A549 (cell line): ENCODE measurements at regions of chr3 and their contacts with region 1.

Region 1: DNA sequence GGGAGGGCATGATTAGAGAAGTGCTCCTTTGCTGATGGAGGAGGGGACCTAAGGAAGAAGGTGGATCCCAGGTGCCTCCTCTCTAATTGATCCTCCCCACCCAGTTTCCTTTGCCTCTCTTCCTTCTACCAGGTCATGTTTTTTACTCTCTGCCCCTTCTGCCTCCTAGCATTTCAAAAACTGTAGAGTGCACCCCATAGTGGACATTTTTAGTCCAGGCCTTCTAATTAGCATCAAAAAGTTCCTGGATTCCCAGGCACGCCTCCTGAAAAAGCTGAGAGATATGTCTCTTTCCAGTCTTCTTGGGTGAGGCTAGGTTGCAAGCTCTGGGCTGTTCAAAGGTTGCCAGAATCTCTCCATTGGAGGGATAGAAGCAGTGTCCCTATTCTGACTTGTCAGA is 18.7 kb upstream of the ITGB5 start:
- DNase-seq: no peak
- ATAC-seq: peak; percentile 39 to 41; a peak in 2 of 6 replicates
- H3K4me3 ChIP-seq: no peak overlapping the region
- H3K27ac ChIP-seq: no peak overlapping the region
- H3K4me1 ChIP-seq: peaks cover 4% of the 10 kb centered on the region; the same call in 2 of the 3 replicates
- CTCF ChIP-seq: no peak
- EP300 ChIP-seq: no peak
- POLR2A ChIP-seq: no peak
- RAD21 ChIP-seq: peak in 1 of 2 experiments; percentile 25; a peak in 1 of 5 replicates

Region 2: GRCh38 chr3:124559881-124560574 is 345.8 kb before region 1 on chr3:
- CTCF ChIA-PET with region 1: interaction called, 11 read pairs
- POLR2A ChIA-PET with region 1: no interaction called
- DNase-seq: peak; percentile 83 to 85
- ATAC-seq: peak; percentile 82 to 89
- H3K4me3 ChIP-seq: no peak overlapping the region
- H3K27ac ChIP-seq: peak overlapping the region; percentile 55 to 75; a peak in 5 of 6 replicates
- H3K4me1 ChIP-seq: peaks cover 29% of the 10 kb centered on the region
- CTCF ChIP-seq: peak; percentile 87
- EP300 ChIP-seq: no peak
- POLR2A ChIP-seq: no peak
- RAD21 ChIP-seq: peak; percentile 84 to 92

Region 3: DNA sequence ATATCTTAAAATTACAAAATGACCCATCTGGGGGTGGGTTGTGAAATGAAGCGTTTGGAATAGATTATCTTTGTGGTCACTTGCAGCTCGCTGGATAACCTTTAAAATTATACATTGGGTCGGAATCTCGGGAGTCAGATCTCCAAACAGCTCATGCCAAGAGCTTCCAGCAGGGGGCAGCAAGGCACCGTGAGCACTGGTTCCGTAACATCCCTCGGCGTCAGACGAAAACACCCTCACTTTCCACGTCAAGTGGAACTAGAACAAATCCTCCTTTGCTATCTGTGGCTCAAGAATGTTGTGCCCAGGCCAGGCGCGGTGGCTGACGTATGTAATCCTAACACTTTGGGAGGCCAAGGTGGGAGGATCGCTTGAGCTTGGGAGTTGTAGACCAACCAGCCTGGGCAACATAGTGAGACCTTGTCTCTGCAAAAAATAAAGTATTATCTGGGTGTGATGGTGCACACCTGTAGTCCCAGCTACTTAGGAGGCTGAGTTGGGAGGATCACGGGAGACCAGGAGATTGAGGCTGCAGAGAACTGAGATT is 144.5 kb before region 1 on chr3:
- CTCF ChIA-PET with region 1: interaction called, 352 read pairs
- POLR2A ChIA-PET with region 1: interaction called, 5 read pairs
- DNase-seq: peak; percentile 68 to 91
- ATAC-seq: peak; percentile 73
- H3K4me3 ChIP-seq: no peak overlapping the region
- H3K27ac ChIP-seq: peak overlapping the region; percentile 60 to 75
- H3K4me1 ChIP-seq: peaks cover 28% of the 10 kb centered on the region
- CTCF ChIP-seq: peak; percentile 95
- EP300 ChIP-seq: no peak
- POLR2A ChIP-seq: no peak
- RAD21 ChIP-seq: peak; percentile 97 to 98

Region 4: GRCh38 chr3:124800511-124801258 is 105.2 kb before region 1 on chr3:
- CTCF ChIA-PET with region 1: interaction called, 21 read pairs
- POLR2A ChIA-PET with region 1: no interaction called
- DNase-seq: no peak
- ATAC-seq: peak; percentile 16 to 37; a peak in 4 of 6 replicates
- H3K4me3 ChIP-seq: no peak overlapping the region
- H3K27ac ChIP-seq: peak overlapping the region; percentile 43 to 67; a peak in 5 of 6 replicates
- H3K4me1 ChIP-seq: peaks cover 18% of the 10 kb centered on the region
- CTCF ChIP-seq: no peak
- EP300 ChIP-seq: no peak
- POLR2A ChIP-seq: no peak
- RAD21 ChIP-seq: no peak

Region 5: GRCh38 chr3:124834723-124835718 is 70.8 kb before region 1 on chr3:
- CTCF ChIA-PET with region 1: interaction called, 12 read pairs
- POLR2A ChIA-PET with region 1: no interaction called
- DNase-seq: peak; percentile 61 to 91
- ATAC-seq: peak; percentile 36 to 37
- H3K4me3 ChIP-seq: peak overlapping the region; percentile 22; the same call in 1 of the 3 replicates
- H3K27ac ChIP-seq: peak overlapping the region; percentile 93 to 94
- H3K4me1 ChIP-seq: peaks cover 85% of the 10 kb centered on the region
- CTCF ChIP-seq: no peak
- EP300 ChIP-seq: peak; percentile 8 to 84; a peak in 2 of 5 replicates
- POLR2A ChIP-seq: no peak
- RAD21 ChIP-seq: peak in 1 of 2 experiments; percentile 5; a peak in 2 of 5 replicates

Region 6: GRCh38 chr3:124878561-124879336 is 27.1 kb before region 1 on chr3:
- CTCF ChIA-PET with region 1: interaction called, 23 read pairs
- POLR2A ChIA-PET with region 1: no interaction called
- DNase-seq: peak; percentile 92 to 98
- ATAC-seq: peak; percentile 95 to 98
- H3K4me3 ChIP-seq: peak overlapping the region; percentile 22; the same call in 1 of the 3 replicates
- H3K27ac ChIP-seq: peak overlapping the region; percentile 91 to 99
- H3K4me1 ChIP-seq: peaks cover 83% of the 10 kb centered on the region
- CTCF ChIP-seq: no peak
- EP300 ChIP-seq: peak; percentile 95 to 98
- POLR2A ChIP-seq: no peak
- RAD21 ChIP-seq: peak; percentile 25 to 60

Region 7: DNA sequence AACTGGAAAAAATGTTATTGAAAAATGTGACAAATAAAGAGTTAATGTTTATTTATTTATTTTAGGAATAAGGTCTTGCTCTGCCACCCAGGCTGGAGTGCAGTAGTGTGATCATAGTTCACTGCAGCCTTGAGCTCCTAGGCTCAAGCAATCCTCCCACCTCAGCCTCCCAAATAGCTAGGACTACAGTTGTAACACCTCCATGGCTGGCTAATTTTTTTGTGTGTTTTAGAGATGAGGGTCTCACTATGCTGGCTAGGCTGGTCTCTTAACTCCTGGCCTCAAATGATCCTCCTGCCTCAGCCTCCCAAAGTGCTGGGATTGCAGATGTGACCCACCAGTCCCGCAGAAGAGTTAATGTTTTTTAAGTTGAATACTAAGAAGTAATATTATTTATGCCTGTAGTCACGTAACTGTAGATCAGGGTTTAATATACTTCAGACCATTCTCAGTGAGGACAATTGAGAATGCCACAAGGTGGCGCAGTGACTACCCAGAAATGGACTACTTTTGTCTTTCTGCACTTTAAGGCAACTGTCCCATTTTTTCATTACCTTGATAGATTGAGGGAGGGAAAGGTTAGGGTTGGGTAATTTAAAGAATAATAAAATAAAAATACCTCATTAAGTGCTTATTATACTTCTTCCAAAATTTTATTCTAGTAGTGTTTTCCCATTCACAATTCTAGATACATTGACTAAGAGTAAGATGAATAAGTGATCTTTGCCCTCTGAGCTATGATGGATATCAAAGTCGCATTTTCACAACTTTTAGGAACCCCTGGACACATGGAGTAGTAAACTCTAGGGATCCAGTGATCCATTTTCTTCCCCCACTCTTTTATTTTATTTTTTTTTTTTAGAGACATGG is 22.7 kb after region 1 on chr3:
- CTCF ChIA-PET with region 1: interaction called, 13 read pairs
- POLR2A ChIA-PET with region 1: no interaction called
- DNase-seq: peak; percentile 38 to 73
- ATAC-seq: peak; percentile 77 to 92; a peak in 5 of 6 replicates
- H3K4me3 ChIP-seq: no peak overlapping the region
- H3K27ac ChIP-seq: peak overlapping the region; percentile 33 to 69; a peak in 3 of 6 replicates
- H3K4me1 ChIP-seq: peaks cover 13% of the 10 kb centered on the region; the same call in 1 of the 3 replicates
- CTCF ChIP-seq: peak; percentile 93
- EP300 ChIP-seq: no peak
- POLR2A ChIP-seq: no peak
- RAD21 ChIP-seq: peak; percentile 82 to 86